Activated CD4-positive, alpha-beta T cell treated with anti-CD3 and anti-CD28 coated beads, Interleukin-2, amount 10 ng/mL, durations not matched to agents 24 days and 14 days (primary cell): ENCODE measurements at regions of chr10 and their contacts with region 1.

Region 1: GRCh38 chr10:79195091-79195923 is 126.5 kb downstream of the ZMIZ1 start:
- DNase-seq: peak; percentile 94
- H3K4me3 Mint-ChIP-seq: no peak overlapping the region
- H3K27ac Mint-ChIP-seq: no peak overlapping the region
- H3K4me1 Mint-ChIP-seq: peaks cover 3% of the 10 kb centered on the region
- H3K27me3 Mint-ChIP-seq: no peaks in the 10 kb centered on the region

Region 2: GRCh38 chr10:78047314-78047891 is 1147.9 kb before region 1 on chr10:
- intact Hi-C with region 1: loop called (anchors 1 kb)
- DNase-seq: peak; percentile 95
- H3K4me3 Mint-ChIP-seq: no peak overlapping the region
- H3K27ac Mint-ChIP-seq: no peak overlapping the region
- H3K4me1 Mint-ChIP-seq: peaks cover 21% of the 10 kb centered on the region
- H3K27me3 Mint-ChIP-seq: no peaks in the 10 kb centered on the region

Region 3: GRCh38 chr10:78211561-78212051 is 983.7 kb before region 1 on chr10:
- intact Hi-C with region 1: loop called (anchors 5 kb)
- DNase-seq: peak; percentile 62
- H3K4me3 Mint-ChIP-seq: no peak overlapping the region
- H3K27ac Mint-ChIP-seq: no peak overlapping the region
- H3K4me1 Mint-ChIP-seq: no peaks in the 10 kb centered on the region
- H3K27me3 Mint-ChIP-seq: peaks cover 11% of the 10 kb centered on the region

Region 4: GRCh38 chr10:78657163-78657861 is 538.0 kb before region 1 on chr10:
- intact Hi-C with region 1: loop called (anchors 10 kb)
- DNase-seq: peak; percentile 91
- H3K4me3 Mint-ChIP-seq: no peak overlapping the region
- H3K27ac Mint-ChIP-seq: no peak overlapping the region
- H3K4me1 Mint-ChIP-seq: no peaks in the 10 kb centered on the region
- H3K27me3 Mint-ChIP-seq: peaks cover 4% of the 10 kb centered on the region

Region 5: GRCh38 chr10:78852466-78853240 is 342.7 kb before region 1 on chr10:
- intact Hi-C with region 1: loop called (anchors 2 kb)
- DNase-seq: peak; percentile 67
- H3K4me3 Mint-ChIP-seq: no peak overlapping the region
- H3K27ac Mint-ChIP-seq: no peak overlapping the region
- H3K4me1 Mint-ChIP-seq: no peaks in the 10 kb centered on the region
- H3K27me3 Mint-ChIP-seq: no peaks in the 10 kb centered on the region

Region 6: GRCh38 chr10:78931321-78932053 is 263.8 kb before region 1 on chr10:
- intact Hi-C with region 1: loop called (anchors 10 kb)
- DNase-seq: no peak
- H3K4me3 Mint-ChIP-seq: no peak overlapping the region
- H3K27ac Mint-ChIP-seq: no peak overlapping the region
- H3K4me1 Mint-ChIP-seq: no peaks in the 10 kb centered on the region
- H3K27me3 Mint-ChIP-seq: peaks cover 7% of the 10 kb centered on the region